ENCODE measurements at regions of chr9 and their contacts with region 1.

Region 1: DNA sequence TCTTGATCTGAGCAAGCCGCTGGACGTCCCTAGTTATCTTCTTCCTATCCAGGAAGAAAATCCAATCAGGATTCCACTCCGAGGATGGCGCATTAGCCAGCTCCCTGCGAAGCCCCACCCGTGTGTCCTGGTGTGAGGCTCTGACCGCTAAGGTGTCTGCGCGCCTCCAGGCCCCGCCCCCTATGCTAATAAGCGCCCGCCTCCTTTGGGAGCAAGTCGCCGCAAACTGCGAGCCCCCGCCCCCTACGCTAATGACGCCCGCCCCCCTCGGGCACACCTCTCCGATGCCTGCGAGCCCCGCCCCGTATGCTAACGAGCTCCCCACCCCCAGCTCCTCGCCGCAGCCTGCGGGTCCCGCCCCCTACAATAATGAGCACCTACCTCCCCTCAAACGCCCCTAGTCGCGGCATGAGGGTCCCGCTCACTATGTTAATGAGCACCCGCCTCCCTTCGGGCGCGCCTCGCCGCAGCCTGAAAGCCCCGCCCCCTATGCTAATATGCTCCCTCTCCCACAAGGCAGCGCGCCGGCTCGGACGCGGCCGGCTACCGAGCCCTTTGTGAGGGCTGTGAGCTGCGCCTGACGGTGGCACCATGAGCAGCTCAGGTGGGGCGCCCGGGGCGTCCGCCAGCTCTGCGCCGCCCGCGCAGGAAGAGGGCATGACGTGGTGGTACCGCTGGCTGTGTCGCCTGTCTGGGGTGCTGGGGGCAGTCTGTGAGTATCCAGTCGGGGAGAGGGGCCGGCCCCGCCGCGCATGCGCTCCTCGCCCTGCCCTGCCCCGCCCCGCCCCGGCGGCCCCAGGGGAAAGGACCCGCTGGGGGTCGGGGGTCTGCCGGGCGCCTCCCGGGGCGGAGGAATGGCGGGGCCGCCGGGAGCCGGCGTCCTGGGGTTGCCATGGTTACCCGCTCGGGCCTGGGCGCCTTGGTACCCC is at the start of gene CACFD1:
- H3K4me3 ChIP-seq: peak within 1 kb of the TSS; percentile 86
- H3K27ac ChIP-seq: peak within 1 kb of the TSS; percentile 92
- H3K4me1 ChIP-seq: no peaks in the 10 kb centered on the region
- CTCF ChIP-seq: no peak; the same call in 1 of the 2 replicates

Region 2: GRCh38 chr9:132957805-132958204 is 501.9 kb before region 1 on chr9:
- CTCF ChIA-PET with region 1: no interaction called
- POLR2A ChIA-PET with region 1: no interaction called
- H3K4me3 ChIP-seq: no peak overlapping the region
- H3K27ac ChIP-seq: no peak overlapping the region
- H3K4me1 ChIP-seq: no peaks in the 10 kb centered on the region
- CTCF ChIP-seq: no peak

Region 3: DNA sequence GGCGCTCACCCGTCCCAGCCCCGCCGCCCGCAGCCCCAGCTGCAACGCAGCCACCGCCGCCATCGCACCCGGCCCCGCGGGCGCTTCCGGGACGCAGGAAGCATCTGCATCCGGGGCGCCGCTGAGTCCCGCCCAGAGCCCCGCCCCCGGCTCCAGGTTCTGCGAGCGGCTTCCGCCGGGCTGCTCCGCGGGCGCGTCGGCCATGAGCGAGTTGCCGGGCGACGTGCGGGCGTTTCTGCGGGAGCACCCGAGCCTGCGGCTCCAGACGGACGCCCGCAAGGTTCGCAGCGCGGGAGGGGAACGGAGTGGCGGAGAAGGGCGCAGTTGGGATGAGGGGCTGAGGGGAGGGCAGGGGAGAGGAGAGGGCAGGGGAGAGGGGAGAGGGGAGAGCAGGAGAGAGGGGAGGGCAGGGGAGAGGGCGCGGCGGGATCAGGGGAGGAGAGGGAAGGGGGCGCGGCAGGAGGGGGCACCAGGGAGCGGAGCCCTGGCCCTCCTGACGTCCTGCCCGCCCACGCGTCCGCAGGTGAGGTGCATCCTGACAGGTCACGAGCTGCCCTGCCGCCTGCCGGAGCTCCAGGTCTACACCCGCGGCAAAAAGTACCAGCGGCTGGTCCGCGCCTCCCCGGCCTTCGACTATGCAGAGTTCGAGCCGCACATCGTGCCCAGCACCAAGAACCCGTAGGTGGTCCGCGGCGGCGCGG is 103.2 kb before region 1 on chr9 and contains the starts of genes SURF1 and SURF2:
- CTCF ChIA-PET with region 1: interaction called, 5 read pairs
- POLR2A ChIA-PET with region 1: interaction called, 10 read pairs
- H3K4me3 ChIP-seq: peak within 1 kb of the TSS; percentile 83
- H3K27ac ChIP-seq: peak within 1 kb of the TSS; percentile 43; the same call in 1 of the 2 replicates
- H3K4me1 ChIP-seq: no peaks in the 10 kb centered on the region
- CTCF ChIP-seq: no peak; the same call in none of the 2 replicates

Region 4: GRCh38 chr9:133417541-133418461 is 41.9 kb before region 1 on chr9 and contains the start of gene REXO4:
- CTCF ChIA-PET with region 1: interaction called, 3 read pairs
- POLR2A ChIA-PET with region 1: interaction called, 28 read pairs
- H3K4me3 ChIP-seq: peak within 1 kb of the TSS; percentile 63
- H3K27ac ChIP-seq: peak within 1 kb of the TSS; percentile 77
- H3K4me1 ChIP-seq: no peaks in the 10 kb centered on the region; the same call in 1 of the 2 replicates
- CTCF ChIP-seq: no peak; the same call in 1 of the 2 replicates

Region 5: GRCh38 chr9:133429641-133430161 is 30.0 kb before region 1 on chr9:
- CTCF ChIA-PET with region 1: interaction called, 5 read pairs
- POLR2A ChIA-PET with region 1: interaction called, 12 read pairs
- H3K4me3 ChIP-seq: no peak overlapping the region
- H3K27ac ChIP-seq: no peak overlapping the region
- H3K4me1 ChIP-seq: 0 out of 2 replicates have a peak, but pooled peaks cover 3% of the 10 kb centered on the region
- CTCF ChIP-seq: no peak

Region 6: GRCh38 chr9:133443982-133444381 is 15.8 kb before region 1 on chr9:
- CTCF ChIA-PET with region 1: interaction called, 4 read pairs
- POLR2A ChIA-PET with region 1: interaction called, 10 read pairs
- H3K4me3 ChIP-seq: no peak overlapping the region
- H3K27ac ChIP-seq: no peak overlapping the region
- H3K4me1 ChIP-seq: no peaks in the 10 kb centered on the region
- CTCF ChIP-seq: no peak

Region 7: DNA sequence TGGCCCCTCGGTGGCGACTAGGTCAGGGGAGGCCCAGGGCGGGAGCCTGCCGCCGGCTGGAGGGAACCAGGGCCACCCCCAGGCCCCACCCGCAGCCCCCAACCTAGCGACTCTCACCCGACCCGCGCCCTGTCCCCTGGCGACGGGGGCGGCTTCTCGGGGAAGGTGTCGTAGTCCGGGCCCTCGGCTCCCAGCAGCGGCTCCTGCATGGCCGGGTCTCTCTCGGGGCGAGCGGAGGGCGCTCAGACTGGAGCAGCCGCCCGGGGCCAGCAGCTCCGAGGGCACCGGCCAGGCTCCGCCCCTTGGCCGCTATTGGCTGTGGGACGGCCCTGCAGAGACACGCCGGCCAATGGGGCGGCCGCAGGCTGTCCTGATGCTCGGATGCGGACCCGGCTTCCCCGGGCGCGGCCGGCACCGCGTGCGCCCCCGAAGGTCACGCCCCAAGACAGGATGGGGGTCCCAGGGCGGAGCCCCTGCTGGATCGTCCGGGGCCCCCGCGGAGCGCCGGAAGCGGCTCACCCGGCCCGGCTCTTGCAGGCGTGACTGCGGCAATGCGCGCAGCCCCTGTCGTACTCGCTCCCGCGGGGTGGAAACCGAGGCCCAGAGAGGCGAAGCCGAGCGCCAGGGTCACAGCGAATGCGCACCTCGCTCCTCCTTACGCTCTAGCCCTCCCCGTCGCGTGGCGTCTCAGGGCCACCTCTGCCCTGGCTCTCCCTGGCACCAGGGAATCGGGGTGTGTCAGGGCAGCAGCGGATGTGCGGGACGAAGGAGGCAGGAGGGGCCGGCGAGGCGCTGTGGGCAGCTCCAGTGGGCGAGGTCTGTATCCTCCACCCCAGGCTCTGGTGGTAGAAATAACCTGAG is 19.3 kb after region 1 on chr9 and contains the start of gene SLC2A6:
- CTCF ChIA-PET with region 1: interaction called, 3 read pairs
- POLR2A ChIA-PET with region 1: interaction called, 10 read pairs
- H3K4me3 ChIP-seq: peak within 1 kb of the TSS; percentile 52
- H3K27ac ChIP-seq: no peak within 1 kb of the TSS; the same call in 1 of the 2 replicates
- H3K4me1 ChIP-seq: no peaks in the 10 kb centered on the region
- CTCF ChIP-seq: no peak

Region 8: GRCh38 chr9:133485361-133486260 is 25.9 kb after region 1 on chr9:
- CTCF ChIA-PET with region 1: interaction called, 10 read pairs
- POLR2A ChIA-PET with region 1: no interaction called
- H3K4me3 ChIP-seq: no peak overlapping the region
- H3K27ac ChIP-seq: no peak overlapping the region
- H3K4me1 ChIP-seq: no peaks in the 10 kb centered on the region
- CTCF ChIP-seq: no peak

Region 9: DNA sequence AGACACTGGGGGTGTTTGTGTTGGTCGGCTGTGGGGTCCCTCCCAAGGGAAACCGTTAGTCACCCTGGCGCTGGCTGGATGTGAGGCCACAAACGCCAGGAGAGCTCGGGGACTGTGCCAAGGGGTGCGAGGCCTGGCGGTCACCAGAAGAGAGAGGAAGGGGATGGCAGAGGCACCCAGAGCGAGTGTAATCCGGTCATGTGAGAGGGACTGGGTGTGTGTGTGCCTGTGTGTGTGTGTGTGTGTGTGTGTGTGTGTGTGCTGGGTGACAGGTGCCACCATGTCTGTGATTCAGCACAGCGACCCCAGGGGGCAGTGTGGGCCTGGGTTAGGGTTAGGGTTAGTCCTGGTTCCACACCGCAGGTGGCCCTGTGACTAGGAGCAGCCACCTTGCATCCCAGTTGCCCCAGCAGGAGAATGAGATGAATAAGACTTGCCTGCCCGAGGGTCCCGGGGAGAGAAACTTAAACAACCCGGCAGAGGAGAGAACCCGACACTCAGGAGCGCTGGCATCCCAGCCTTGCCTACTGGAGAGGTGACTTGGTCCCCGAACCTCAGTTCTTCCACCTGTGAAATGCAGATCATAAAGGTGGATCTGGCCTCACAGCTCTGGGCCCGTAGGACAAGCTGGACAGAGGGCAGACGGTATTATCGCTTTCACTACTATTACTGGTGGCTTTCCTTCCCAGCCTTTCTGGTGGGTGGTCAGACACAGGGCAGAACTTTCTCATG is 73.4 kb after region 1 on chr9:
- CTCF ChIA-PET with region 1: no interaction called
- POLR2A ChIA-PET with region 1: no interaction called
- H3K4me3 ChIP-seq: no peak overlapping the region
- H3K27ac ChIP-seq: no peak overlapping the region
- H3K4me1 ChIP-seq: no peaks in the 10 kb centered on the region
- CTCF ChIP-seq: peak; percentile 93

Measured in HEK293 (cell line).